ENCODE measurements at regions of chr12 and their contacts with region 1.

Region 1: GRCh38 chr12:68695454-68695853 is 8.7 kb downstream of the NUP107 start:
- DNase-seq: no peak
- ATAC-seq: no peak
- H3K4me3 ChIP-seq: no peak overlapping the region
- H3K27ac ChIP-seq: no peak overlapping the region
- H3K4me1 ChIP-seq: no peaks in the 10 kb centered on the region
- H3K27me3 ChIP-seq: no peaks in the 10 kb centered on the region
- CTCF ChIP-seq: no peak

Region 2: DNA sequence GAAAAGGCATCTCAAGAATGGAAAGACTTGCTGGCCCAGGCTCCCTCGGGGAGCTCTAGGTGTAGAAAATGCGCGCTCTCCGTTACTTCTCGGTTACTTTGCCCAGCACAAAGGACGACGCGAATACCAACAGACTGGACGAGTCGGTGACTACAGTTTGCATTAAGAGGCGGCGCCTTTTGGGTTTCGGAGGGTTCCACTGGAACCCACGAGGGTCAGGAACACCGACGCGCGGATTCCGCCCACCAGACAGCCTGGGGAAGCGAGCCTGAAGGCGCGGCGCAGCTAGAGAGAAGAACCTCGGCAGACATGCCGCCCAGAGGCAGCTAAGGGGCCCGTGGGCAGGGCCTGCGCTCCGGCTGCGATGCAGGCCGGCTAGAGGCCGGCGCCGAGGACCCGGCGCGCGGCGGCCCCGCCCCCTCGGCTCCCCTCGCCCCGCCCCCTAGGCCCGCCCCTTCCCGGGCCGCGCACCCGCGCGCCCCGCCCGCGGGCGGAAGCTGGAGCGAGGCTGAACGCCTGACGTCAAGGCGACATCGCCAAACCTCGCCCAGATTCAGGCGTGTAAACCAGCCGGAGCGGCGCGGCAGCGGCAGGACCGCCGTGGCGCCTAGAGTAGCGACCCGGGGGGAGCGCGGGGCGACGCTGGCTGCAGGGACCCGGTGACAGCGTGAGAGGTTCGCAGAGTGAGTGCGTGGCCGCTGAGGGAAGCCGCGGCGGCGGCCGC is 84.9 kb before region 1 on chr12 and contains the start of gene RAP1B:
- intact Hi-C with region 1: no loop called
- DNase-seq: peak; percentile 88 to 96
- ATAC-seq: peak; percentile 94 to 97 (median 96)
- H3K4me3 ChIP-seq: peak within 1 kb of the TSS; percentile 93
- H3K27ac ChIP-seq: peak within 1 kb of the TSS; percentile 98
- H3K4me1 ChIP-seq: peaks cover 38% of the 10 kb centered on the region
- H3K27me3 ChIP-seq: no peaks in the 10 kb centered on the region
- CTCF ChIP-seq: no peak
- total RNA-seq, gene RAP1B: 36.2 to 65.6 (median 54.1) TPM

Region 3: DNA sequence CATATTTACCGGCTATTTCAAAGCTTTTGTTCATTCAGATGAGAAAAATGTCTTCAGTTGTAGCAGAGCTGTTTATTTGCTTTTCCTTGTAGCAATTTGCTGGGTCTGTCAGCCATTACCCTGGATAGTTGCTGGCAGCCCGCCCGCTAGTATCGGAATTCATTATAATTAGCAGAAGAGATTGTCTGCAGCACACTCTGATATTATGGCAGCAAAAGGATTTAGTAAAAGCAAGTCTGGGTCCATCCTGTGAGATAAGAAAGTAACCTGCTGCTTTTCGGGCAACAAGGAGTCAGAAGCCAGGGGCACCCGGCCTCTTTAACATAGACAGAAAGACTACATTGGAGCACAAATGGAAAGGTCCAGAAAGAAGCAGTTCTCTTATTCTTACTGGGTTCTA is 44.4 kb after region 1 on chr12:
- intact Hi-C with region 1: loop called in 1 of 2 experiments (anchors 5 kb)
- DNase-seq: no peak
- ATAC-seq: no peak
- H3K4me3 ChIP-seq: no peak overlapping the region
- H3K27ac ChIP-seq: no peak overlapping the region
- H3K4me1 ChIP-seq: no peaks in the 10 kb centered on the region
- H3K27me3 ChIP-seq: no peaks in the 10 kb centered on the region
- CTCF ChIP-seq: no peak

Region 4: DNA sequence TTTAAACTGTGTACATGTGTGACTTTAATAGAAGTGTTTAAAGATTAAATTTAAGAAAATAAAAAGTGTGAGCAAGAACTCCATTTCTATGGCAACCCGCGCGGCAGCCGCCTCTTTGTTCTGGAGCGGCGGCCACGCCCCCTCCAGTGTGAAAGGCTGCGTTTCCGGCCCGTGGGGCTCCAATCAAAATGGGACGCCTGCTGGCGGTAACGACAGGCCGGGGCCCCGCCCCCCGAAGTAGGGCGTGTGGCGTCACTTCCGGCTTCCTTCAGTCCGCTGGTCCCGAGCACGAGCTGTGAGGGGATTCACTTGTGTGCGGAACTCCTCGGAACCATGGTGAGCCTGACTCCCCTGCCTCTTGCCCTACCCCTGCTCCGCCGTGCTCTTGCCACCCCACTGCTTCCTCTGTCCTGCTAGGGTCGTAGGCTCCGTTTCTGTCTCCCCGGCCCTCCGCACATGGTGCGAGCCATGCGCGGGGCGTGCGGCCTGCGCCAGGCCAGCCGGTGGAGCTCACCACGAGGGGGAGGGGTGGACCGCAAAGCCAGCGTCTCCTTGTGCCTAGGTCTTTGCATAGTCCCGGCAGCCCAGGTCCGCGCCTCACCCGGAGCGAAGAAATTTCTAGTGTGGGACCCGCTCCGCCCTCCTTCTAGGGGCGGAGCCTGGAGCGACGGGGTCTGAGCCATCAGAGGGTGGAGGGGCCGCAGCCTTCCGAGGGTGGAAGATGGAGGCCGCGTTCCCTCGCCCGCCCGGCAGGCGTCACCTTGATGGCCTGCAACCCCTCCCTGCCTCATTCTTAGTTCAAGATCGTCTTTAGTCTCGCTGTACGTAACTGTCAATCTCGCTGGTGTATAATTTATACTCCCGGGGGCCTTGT is 890.0 kb after region 1 on chr12 and contains the start of gene CCT2:
- intact Hi-C with region 1: no loop called
- DNase-seq: peak; percentile 97 to 99
- ATAC-seq: peak; percentile 99 to 100 (median 100)
- H3K4me3 ChIP-seq: peak within 1 kb of the TSS; percentile 95
- H3K27ac ChIP-seq: peak within 1 kb of the TSS; percentile 96
- H3K4me1 ChIP-seq: peaks cover 10% of the 10 kb centered on the region
- H3K27me3 ChIP-seq: no peaks in the 10 kb centered on the region
- CTCF ChIP-seq: peak; percentile 40
- total RNA-seq, gene CCT2: 96.9 to 190 (median 149) TPM